HCT116 (cell line): ENCODE measurements at regions of chr10 and their contacts with region 1.

Region 1: DNA sequence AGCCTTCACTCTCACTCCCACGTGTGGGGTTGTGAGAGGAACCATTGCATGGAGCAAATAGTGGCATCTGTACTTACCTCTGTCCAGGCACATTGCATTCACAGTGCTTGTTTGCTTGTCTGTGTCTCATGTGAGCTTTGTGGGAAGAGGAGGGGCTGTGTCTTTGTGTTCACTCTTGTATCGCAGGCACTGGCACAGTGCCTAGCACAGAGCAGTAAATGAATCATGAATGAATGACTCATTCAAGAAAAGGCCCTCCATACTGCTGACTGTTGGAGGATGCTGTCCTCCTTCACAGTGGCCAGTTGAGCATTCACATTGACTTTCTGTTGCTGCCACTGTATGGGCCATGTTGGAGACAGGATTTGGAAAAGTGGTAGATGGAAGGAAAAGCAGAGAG is 125.3 kb downstream of the SORCS3 start:
- DNase-seq: peak; percentile 67
- ATAC-seq: peak; percentile 90
- H3K4me3 ChIP-seq: no peak overlapping the region
- H3K27ac ChIP-seq: no peak overlapping the region
- H3K4me1 ChIP-seq: peaks cover 0 to 13% of the 10 kb centered on the region in 2 experiments; a peak in 2 of 4 replicates
- H3K27me3 ChIP-seq: peaks cover 45% of the 10 kb centered on the region
- CTCF ChIP-seq: no peak
- POLR2A ChIP-seq: no peak
- RAD21 ChIP-seq: no peak

Region 2: GRCh38 chr10:104937572-104937971 is 171.2 kb after region 1 on chr10:
- CTCF ChIA-PET with region 1: no interaction called
- POLR2A ChIA-PET with region 1: no interaction called
- RAD21 ChIA-PET with region 1: no interaction called
- intact Hi-C with region 1: loop called (anchors 1 kb)
- DNase-seq: peak; percentile 93
- ATAC-seq: peak; percentile 95
- H3K4me3 ChIP-seq: 0 out of 4 replicates have a peak overlapping the region, but pooled peaks of 1 of the 2 experiments have one; percentile 11
- H3K27ac ChIP-seq: no peak overlapping the region
- H3K4me1 ChIP-seq: peaks cover 17 to 23% of the 10 kb centered on the region in 2 experiments
- H3K27me3 ChIP-seq: no peaks in the 10 kb centered on the region
- CTCF ChIP-seq: no peak
- POLR2A ChIP-seq: no peak
- RAD21 ChIP-seq: no peak